Activated CD8-positive, alpha-beta memory T cell treated with anti-CD3 and anti-CD28 coated beads, Interleukin-2, amount 10 ng/mL, durations not matched to agents 7 days and 5 days (primary cell): ENCODE measurements at regions of chr1 and their contacts with region 1.

Region 1: GRCh38 chr1:15128520-15129313 is 24.8 kb upstream of the TMEM51 start:
- DNase-seq: peak; percentile 78
- ATAC-seq: peak; percentile 93
- H3K4me3 Mint-ChIP-seq: no peak overlapping the region
- H3K27ac Mint-ChIP-seq: no peak overlapping the region
- H3K4me1 Mint-ChIP-seq: no peaks in the 10 kb centered on the region
- H3K27me3 Mint-ChIP-seq: peaks cover 22% of the 10 kb centered on the region

Region 2: DNA sequence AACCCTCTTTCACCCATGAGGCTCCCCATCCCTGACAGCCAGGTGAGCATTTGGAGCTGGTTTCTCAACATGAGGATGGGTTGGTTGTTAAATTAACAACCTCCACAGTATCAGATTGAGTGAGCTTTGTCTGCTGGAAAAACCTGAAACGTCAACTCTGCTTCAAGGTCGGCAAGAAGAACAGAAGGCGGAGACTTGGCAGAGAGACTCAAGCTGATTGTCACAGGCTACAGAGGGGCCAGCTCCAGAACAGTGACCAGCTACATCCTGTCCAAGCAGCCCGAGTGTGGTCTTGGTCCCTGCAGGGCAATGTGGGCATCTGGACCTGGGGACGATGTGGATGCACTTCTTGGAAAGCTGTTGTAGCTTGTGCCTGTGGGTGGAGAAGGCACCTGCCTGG is 11.8 kb before region 1 on chr1:
- CTCF ChIA-PET with region 1: interaction called, 13 read pairs
- DNase-seq: no peak
- ATAC-seq: no peak
- H3K4me3 Mint-ChIP-seq: no peak overlapping the region
- H3K27ac Mint-ChIP-seq: no peak overlapping the region
- H3K4me1 Mint-ChIP-seq: peaks cover 10% of the 10 kb centered on the region
- H3K27me3 Mint-ChIP-seq: peaks cover 26% of the 10 kb centered on the region

Region 3: GRCh38 chr1:15141935-15142539 is 13.3 kb after region 1 on chr1:
- CTCF ChIA-PET with region 1: interaction called, 11 read pairs
- DNase-seq: no peak
- ATAC-seq: no peak
- H3K4me3 Mint-ChIP-seq: no peak overlapping the region
- H3K27ac Mint-ChIP-seq: no peak overlapping the region
- H3K4me1 Mint-ChIP-seq: no peaks in the 10 kb centered on the region
- H3K27me3 Mint-ChIP-seq: peaks cover 53% of the 10 kb centered on the region

Region 4: GRCh38 chr1:15272009-15272788 is 143.5 kb after region 1 on chr1:
- CTCF ChIA-PET with region 1: interaction called, 53 read pairs
- DNase-seq: peak; percentile 57
- ATAC-seq: peak; percentile 73
- H3K4me3 Mint-ChIP-seq: no peak overlapping the region
- H3K27ac Mint-ChIP-seq: no peak overlapping the region
- H3K4me1 Mint-ChIP-seq: peaks cover 3% of the 10 kb centered on the region
- H3K27me3 Mint-ChIP-seq: peaks cover 39% of the 10 kb centered on the region

Region 5: DNA sequence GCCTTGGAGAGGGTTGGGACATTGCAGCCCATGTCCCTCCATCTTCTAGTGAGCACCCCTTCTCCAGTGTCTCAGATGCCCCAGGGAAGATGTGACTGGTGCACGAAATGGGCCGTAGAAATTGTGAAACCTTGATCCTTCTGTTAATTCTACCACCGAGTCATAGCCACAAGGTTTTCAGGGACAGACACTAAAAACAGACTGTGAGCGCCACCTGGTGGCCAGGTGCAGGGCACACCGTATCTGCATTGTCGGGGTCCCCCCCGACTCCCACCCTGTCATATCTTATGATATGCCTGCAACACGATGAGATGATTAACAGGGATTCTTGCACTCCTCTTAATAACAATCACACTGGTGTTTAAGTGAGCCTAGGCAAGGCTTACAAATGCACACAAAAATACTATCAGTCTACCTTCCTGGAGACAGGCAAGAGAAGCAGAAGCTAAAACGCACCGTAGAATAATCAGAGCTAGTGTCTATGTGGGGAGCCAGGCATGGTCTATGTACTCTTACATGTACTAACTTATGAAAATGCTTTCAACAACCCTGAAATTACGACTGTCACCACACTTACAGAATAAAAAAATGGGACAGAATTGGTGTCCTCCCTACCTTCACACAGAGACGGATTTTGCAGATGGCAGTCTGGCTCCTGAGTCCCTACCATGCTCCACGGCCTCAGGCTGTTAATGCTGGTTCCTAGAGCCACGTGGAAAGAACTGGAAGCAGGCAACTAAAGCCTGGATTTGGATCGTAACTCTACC is 176.2 kb after region 1 on chr1:
- CTCF ChIA-PET with region 1: interaction called, 54 read pairs
- DNase-seq: peak; percentile 72
- ATAC-seq: peak; percentile 57
- H3K4me3 Mint-ChIP-seq: no peak overlapping the region
- H3K27ac Mint-ChIP-seq: no peak overlapping the region
- H3K4me1 Mint-ChIP-seq: peaks cover 5% of the 10 kb centered on the region
- H3K27me3 Mint-ChIP-seq: peaks cover 14% of the 10 kb centered on the region